ENCODE measurements at regions of chr4 and their contacts with region 1.

Region 1: DNA sequence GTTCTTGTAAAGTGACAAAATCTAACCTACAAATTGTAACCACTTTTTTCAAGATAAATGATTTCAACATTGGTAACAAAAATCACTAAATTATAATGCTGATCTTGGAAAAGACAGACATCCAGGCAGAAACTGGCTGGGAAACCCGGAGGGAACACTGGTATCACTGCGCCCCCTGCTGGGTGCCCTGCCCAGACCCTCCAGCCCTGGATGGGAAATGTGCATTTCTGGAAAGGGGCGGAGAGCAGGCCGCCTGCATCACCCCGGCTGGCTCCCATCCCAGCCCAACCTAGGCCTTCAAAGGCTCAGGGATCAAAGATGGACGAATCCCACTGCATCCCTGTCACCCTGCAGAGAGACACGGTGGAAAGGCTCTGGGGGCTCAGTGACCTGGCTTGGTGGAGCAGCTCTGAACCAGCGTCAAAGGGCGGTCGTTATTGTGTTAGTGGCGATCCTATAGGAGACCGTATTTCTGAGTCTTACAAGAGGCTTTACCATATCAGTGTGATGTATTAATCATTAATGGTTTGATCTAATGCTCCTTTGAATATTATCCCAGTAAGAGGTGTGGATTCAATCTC is 37.3 kb downstream of the ACOX3 start:
- DNase-seq: peak; percentile 83
- H3K4me3 Mint-ChIP-seq: no peak overlapping the region
- H3K27ac Mint-ChIP-seq: no peak overlapping the region
- H3K4me1 Mint-ChIP-seq: no peaks in the 10 kb centered on the region
- H3K27me3 Mint-ChIP-seq: no peaks in the 10 kb centered on the region
- CTCF ChIP-seq: peak; percentile 88

Region 2: GRCh38 chr4:8241895-8242696 is 161.2 kb before region 1 on chr4:
- CTCF ChIA-PET with region 1: interaction called, 41 read pairs
- POLR2A ChIA-PET with region 1: no interaction called
- intact Hi-C with region 1: loop called (anchors 1 kb)
- DNase-seq: peak; percentile 72
- H3K4me3 Mint-ChIP-seq: no peak overlapping the region
- H3K27ac Mint-ChIP-seq: no peak overlapping the region
- H3K4me1 Mint-ChIP-seq: no peaks in the 10 kb centered on the region
- H3K27me3 Mint-ChIP-seq: no peaks in the 10 kb centered on the region
- CTCF ChIP-seq: peak; percentile 96

Region 3: DNA sequence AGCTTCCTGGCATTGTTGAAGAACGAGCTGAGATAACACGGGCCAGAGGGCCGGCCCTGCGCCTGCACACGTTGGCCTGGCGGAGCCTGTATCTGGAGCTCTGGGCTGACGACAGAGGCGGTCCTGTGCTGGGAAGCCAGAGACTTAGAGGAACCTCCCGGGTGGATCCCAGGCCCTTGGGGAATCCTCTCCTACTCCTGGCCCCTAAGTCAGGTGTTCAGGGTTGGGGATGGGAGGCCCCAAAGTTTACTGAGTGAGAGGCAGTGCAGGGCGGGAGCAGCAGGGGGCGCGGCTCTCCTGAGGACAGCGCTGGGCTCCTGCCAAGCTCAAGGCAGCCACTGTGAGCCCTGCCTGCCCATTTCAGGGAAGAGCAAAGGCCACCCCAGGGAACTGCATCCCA is 136.2 kb before region 1 on chr4:
- CTCF ChIA-PET with region 1: interaction called, 29 read pairs
- POLR2A ChIA-PET with region 1: no interaction called
- intact Hi-C with region 1: loop called (anchors 1 kb)
- DNase-seq: peak; percentile 81
- H3K4me3 Mint-ChIP-seq: no peak overlapping the region
- H3K27ac Mint-ChIP-seq: no peak overlapping the region
- H3K4me1 Mint-ChIP-seq: no peaks in the 10 kb centered on the region
- H3K27me3 Mint-ChIP-seq: peaks cover 32% of the 10 kb centered on the region
- CTCF ChIP-seq: peak; percentile 81

Region 4: DNA sequence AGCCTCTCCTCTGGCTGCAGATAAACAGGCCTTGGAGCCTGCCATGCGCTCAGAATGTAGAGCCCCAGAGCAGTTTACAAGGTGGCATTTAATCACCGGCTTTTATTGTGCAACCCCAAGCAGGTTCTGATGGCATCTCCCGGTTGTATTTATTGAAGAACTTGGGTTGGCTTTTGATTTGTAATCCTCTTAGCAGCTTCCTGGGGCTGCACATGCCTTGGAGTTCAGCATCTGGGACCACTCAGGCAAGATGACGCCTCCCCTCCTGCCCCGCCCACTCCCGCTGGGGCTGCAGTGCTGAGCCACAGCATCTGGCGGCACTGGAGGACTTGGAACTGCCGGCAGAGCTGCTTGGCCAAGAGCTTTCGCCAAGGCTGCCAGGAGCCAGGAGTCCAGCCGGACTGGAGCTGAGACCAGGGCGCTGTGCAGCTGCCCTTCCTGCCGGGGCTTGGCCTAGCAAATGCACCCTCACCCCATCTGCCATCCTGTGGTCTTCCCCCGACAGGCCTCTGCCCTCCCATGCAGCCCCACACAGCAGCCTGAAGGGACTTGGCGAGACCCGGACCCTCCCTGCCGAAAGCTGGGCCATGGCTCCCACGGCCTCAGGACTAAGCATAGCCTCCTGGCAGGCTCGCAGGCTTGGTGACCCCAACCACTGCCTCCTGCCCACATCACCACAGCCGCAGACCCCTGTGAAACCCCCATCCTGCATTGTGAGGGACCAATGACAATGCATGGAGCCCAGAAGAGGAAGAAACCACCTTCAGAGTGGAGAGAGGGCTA is 128.3 kb before region 1 on chr4:
- CTCF ChIA-PET with region 1: interaction called, 7 read pairs
- POLR2A ChIA-PET with region 1: no interaction called
- intact Hi-C with region 1: loop called (anchors 2 kb)
- DNase-seq: peak; percentile 24
- H3K4me3 Mint-ChIP-seq: no peak overlapping the region
- H3K27ac Mint-ChIP-seq: no peak overlapping the region
- H3K4me1 Mint-ChIP-seq: peaks cover 11% of the 10 kb centered on the region
- H3K27me3 Mint-ChIP-seq: peaks cover 19% of the 10 kb centered on the region
- CTCF ChIP-seq: no peak

Region 5: GRCh38 chr4:8391972-8392371 is 11.3 kb before region 1 on chr4:
- CTCF ChIA-PET with region 1: interaction called, 14 read pairs
- POLR2A ChIA-PET with region 1: no interaction called
- intact Hi-C with region 1: no loop called
- DNase-seq: peak; percentile 58
- H3K4me3 Mint-ChIP-seq: no peak overlapping the region
- H3K27ac Mint-ChIP-seq: no peak overlapping the region
- H3K4me1 Mint-ChIP-seq: peaks cover 18% of the 10 kb centered on the region
- H3K27me3 Mint-ChIP-seq: no peaks in the 10 kb centered on the region
- CTCF ChIP-seq: no peak